T-cell (primary cell): ENCODE measurements at regions of chr6 and their contacts with region 1.

Region 1: DNA sequence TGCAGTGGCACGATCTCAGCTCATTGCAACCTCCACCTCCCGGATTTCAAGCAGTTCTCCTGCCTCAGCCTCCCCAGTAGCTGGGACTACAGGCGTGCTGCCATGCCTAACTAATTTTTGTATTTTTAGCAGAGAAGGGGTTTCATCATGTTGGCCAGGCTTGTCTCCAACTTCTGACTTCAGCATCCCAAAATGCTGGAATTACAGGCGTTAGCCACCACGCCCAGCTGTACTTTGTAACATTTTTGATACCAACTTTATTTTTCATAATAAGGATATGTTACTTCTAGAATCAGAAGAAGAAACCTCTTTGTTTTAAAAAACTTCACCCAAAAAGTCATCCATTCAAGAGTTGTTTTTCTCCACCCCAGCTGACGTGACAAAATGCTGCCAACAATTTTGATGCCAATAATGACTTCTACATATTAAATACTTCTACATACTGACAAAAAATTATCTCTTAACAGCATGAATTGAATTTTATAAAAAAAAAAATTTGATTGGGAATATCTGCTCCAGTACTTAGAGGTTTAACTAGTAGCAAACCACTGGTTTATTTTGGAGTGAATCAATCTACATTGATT is 22.5 kb upstream of the PRIM2 start:
- DNase-seq: no peak
- ATAC-seq: no peak
- H3K4me3 ChIP-seq: no peak overlapping the region
- H3K4me3 Mint-ChIP-seq: no peak overlapping the region
- H3K27ac ChIP-seq: no peak overlapping the region
- H3K27ac Mint-ChIP-seq: no peak overlapping the region
- H3K4me1 ChIP-seq: no peaks in the 10 kb centered on the region
- H3K4me1 Mint-ChIP-seq: no peaks in the 10 kb centered on the region
- H3K27me3 ChIP-seq: peaks cover 0 to 4% of the 10 kb centered on the region in 2 experiments
- H3K27me3 Mint-ChIP-seq: peaks cover under 1 to 7% of the 10 kb centered on the region in 2 donors

Region 2: GRCh38 chr6:56730663-56731529 is 564.1 kb before region 1 on chr6:
- CTCF ChIA-PET with region 1: no interaction called
- POLR2A ChIA-PET with region 1: interaction called in 1 of 2 experiments, 15 read pairs
- DNase-seq: no peak
- ATAC-seq: no peak
- H3K4me3 ChIP-seq: no peak overlapping the region
- H3K4me3 Mint-ChIP-seq: no peak overlapping the region
- H3K27ac ChIP-seq: no peak overlapping the region
- H3K27ac Mint-ChIP-seq: no peak overlapping the region
- H3K4me1 ChIP-seq: no peaks in the 10 kb centered on the region
- H3K4me1 Mint-ChIP-seq: no peaks in the 10 kb centered on the region
- H3K27me3 ChIP-seq: no peaks in the 10 kb centered on the region
- H3K27me3 Mint-ChIP-seq: no peaks in the 10 kb centered on the region